ENCODE measurements at regions of chr12 and their contacts with region 1.

Region 1: GRCh38 chr12:55738123-55739024 is 4.5 kb upstream of the GDF11 start:
- DNase-seq: peak in 8 of 9 donors; percentile 69 to 88 (median 81)
- ATAC-seq: peak; percentile 79
- H3K4me3 ChIP-seq: peak overlapping the region; percentile 91
- H3K4me3 Mint-ChIP-seq: peak overlapping the region; percentile 74 to 94 (median 89)
- H3K27ac ChIP-seq: peak overlapping the region; percentile 76
- H3K27ac Mint-ChIP-seq: peak overlapping the region; percentile 86 to 96 (median 92)
- H3K4me1 ChIP-seq: peaks cover 15 to 18% of the 10 kb centered on the region in 2 donors
- H3K4me1 Mint-ChIP-seq: peaks cover 26 to 43% (median 29%) of the 10 kb centered on the region in 7 donors
- H3K27me3 ChIP-seq: no peaks in the 10 kb centered on the region
- H3K27me3 Mint-ChIP-seq: peaks cover 0 to 8% (median 0%) of the 10 kb centered on the region in 5 donors

Region 2: GRCh38 chr12:55715833-55716581 is 22.4 kb before region 1 on chr12 and contains the start of gene BLOC1S1:
- CTCF ChIA-PET with region 1: interaction called, 46 read pairs
- POLR2A ChIA-PET with region 1: interaction called, 24 read pairs
- intact Hi-C with region 1: loop called in 1 of 2 experiments (anchors 2 kb)
- DNase-seq: peak; percentile 82 to 95 (median 90)
- ATAC-seq: peak; percentile 96
- H3K4me3 ChIP-seq: peak within 1 kb of the TSS; percentile 96
- H3K4me3 Mint-ChIP-seq: peak within 1 kb of the TSS; percentile 83 to 98 (median 94)
- H3K27ac ChIP-seq: peak within 1 kb of the TSS; percentile 92
- H3K27ac Mint-ChIP-seq: peak within 1 kb of the TSS; percentile 91 to 98 (median 97)
- H3K4me1 ChIP-seq: peaks cover 19 to 23% of the 10 kb centered on the region in 2 donors
- H3K4me1 Mint-ChIP-seq: peaks cover 15 to 41% (median 36%) of the 10 kb centered on the region in 7 donors
- H3K27me3 ChIP-seq: no peaks in the 10 kb centered on the region
- H3K27me3 Mint-ChIP-seq: peaks cover 0 to 21% (median 0%) of the 10 kb centered on the region in 5 donors
- total RNA-seq, gene BLOC1S1: 37.6 to 112 (median 71.5) TPM

Region 3: DNA sequence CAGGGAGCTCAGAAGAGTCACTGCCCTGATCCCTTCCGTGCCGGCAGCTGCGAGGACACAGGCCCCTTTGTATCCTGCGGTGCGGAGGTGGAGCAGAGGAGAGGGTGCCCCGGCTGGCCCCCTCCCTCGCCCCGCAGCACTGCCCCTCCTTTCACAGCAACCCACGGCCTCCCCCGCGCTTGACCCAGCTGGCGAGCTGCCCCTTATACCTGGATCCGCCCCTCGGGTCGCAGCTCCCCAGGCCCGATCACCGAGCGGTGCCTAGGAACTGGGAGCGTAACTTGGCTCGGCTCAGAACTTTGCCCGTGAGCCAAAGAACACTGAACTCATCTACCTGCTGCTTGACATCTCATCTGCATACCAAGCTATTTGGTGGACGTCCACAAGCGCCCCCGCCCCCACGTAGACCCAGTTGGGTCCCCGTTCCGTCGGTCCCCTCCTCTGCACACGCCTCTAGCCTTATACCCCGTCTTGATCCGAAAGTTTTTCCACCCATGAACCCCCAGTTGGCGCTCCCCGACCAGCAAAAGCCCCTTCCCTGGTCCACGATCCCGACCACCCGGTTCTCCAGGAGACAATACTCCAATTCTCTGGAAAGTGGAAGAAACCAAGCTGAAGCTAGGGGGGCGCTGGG is 91.7 kb after region 1 on chr12:
- CTCF ChIA-PET with region 1: interaction called, 13 read pairs
- POLR2A ChIA-PET with region 1: interaction called, 7 read pairs
- intact Hi-C with region 1: no loop called
- DNase-seq: peak in 5 of 9 donors; percentile 16 to 44 (median 20)
- ATAC-seq: peak; percentile 2
- H3K4me3 ChIP-seq: peak overlapping the region; percentile 99
- H3K4me3 Mint-ChIP-seq: peak overlapping the region; percentile 88 to 99 (median 99)
- H3K27ac ChIP-seq: peak overlapping the region; percentile 84
- H3K27ac Mint-ChIP-seq: peak overlapping the region; percentile 85 to 98 (median 95)
- H3K4me1 ChIP-seq: peaks cover 37 to 40% of the 10 kb centered on the region in 2 donors
- H3K4me1 Mint-ChIP-seq: peaks cover 42 to 69% (median 53%) of the 10 kb centered on the region in 7 donors
- H3K27me3 ChIP-seq: no peaks in the 10 kb centered on the region
- H3K27me3 Mint-ChIP-seq: no peaks in the 10 kb centered on the region

Region 4: DNA sequence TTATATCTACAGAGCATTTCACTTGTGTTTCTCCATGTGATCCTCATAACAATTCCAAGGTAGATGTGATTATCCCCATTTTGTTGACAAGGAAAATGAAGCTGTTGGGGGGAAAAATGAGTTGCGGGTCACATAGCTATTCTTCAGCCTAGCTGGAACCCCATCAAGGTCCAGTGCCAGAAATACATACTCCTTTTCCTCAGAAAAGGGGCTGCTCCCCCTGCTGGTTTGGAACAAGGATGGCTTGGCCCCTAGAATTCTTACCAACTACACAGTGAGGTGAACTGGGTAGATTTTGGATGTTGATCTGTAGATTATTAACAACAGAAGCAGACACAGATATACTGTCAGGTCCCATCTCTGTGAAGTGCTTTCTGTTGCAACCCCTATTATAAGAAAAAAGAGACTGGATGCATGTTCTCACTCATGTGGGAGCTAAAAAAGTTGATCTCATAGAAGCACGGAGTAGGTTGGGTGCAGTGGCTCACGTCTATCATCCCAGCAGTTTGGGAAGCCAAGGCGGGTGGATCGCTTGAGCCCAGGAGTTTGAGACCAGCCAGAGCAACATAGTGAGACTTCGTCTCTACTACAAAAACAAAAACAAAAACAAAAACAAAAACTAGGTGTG is 291.4 kb after region 1 on chr12:
- CTCF ChIA-PET with region 1: interaction called, 18 read pairs
- POLR2A ChIA-PET with region 1: no interaction called
- intact Hi-C with region 1: loop called (anchors 1 to 2 kb)
- DNase-seq: peak in 8 of 9 donors; percentile 24 to 59 (median 46)
- ATAC-seq: peak; percentile 71
- H3K4me3 ChIP-seq: no peak overlapping the region
- H3K4me3 Mint-ChIP-seq: peak overlapping the region in 1 of 10 donors; percentile 1
- H3K27ac ChIP-seq: no peak overlapping the region
- H3K27ac Mint-ChIP-seq: peak overlapping the region in 4 of 9 donors; percentile 3 to 74 (median 32)
- H3K4me1 ChIP-seq: peaks cover 0 to 7% of the 10 kb centered on the region in 2 donors
- H3K4me1 Mint-ChIP-seq: peaks cover 9 to 54% (median 20%) of the 10 kb centered on the region in 7 donors
- H3K27me3 ChIP-seq: no peaks in the 10 kb centered on the region
- H3K27me3 Mint-ChIP-seq: no peaks in the 10 kb centered on the region

Region 5: DNA sequence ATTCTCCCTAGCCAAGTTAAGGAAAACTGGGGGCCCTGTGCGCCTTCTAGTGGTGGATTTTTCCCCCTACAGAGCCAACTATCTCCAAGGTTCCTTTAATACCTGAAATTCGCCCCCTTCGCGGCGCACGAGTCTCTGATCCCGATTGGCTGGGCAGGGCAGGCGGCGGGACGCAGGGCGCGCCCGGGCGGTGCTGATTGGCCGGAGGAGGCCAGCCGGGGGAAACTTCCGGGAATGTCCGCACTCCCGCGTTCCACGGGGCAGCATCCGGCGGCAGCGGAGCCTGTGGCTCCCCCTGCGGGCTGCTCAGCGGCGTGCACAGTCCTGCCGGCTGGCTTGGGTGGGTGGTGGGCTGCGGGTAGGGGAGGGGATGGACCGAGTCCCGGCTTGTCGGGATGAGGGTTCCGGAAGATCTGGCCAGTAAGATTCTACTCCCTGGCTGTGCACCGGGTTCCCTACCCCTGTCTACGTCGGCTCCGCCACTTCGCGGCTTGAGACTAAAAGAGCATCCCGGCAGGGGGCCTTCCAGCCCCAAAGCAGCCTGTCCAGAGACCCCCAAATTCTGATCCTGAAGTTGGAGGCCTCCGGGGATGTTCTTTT is 485.8 kb after region 1 on chr12 and contains the start of gene NABP2:
- CTCF ChIA-PET with region 1: interaction called, 4 read pairs
- POLR2A ChIA-PET with region 1: interaction called, 4 read pairs
- intact Hi-C with region 1: loop called in 1 of 2 experiments (anchors 1 kb)
- DNase-seq: peak; percentile 78 to 97 (median 81)
- ATAC-seq: peak; percentile 85
- H3K4me3 ChIP-seq: peak within 1 kb of the TSS; percentile 82
- H3K4me3 Mint-ChIP-seq: peak within 1 kb of the TSS; percentile 77 to 99 (median 87)
- H3K27ac ChIP-seq: peak within 1 kb of the TSS; percentile 98
- H3K27ac Mint-ChIP-seq: peak within 1 kb of the TSS; percentile 78 to 100 (median 91)
- H3K4me1 ChIP-seq: peaks cover 22 to 27% of the 10 kb centered on the region in 2 donors
- H3K4me1 Mint-ChIP-seq: peaks cover 16 to 57% (median 46%) of the 10 kb centered on the region in 7 donors
- H3K27me3 ChIP-seq: no peaks in the 10 kb centered on the region
- H3K27me3 Mint-ChIP-seq: peaks cover 0 to 3% (median 0%) of the 10 kb centered on the region in 5 donors
- total RNA-seq, gene NABP2: 9.2 to 61.2 (median 11.8) TPM

Measured in naive thymus-derived CD4-positive, alpha-beta T cell (primary cell).